WTC11 (cell line): ENCODE measurements at regions of chr3 and their contacts with region 1.

Region 1: GRCh38 chr3:49093853-49094767 is at the start of gene QRICH1:
- DNase-seq: peak; percentile 98
- ATAC-seq: peak; percentile 84
- H3K4me3 Mint-ChIP-seq: peak within 1 kb of the TSS; percentile 89
- H3K27ac Mint-ChIP-seq: peak within 1 kb of the TSS; percentile 97
- H3K4me1 Mint-ChIP-seq: peaks cover 8% of the 10 kb centered on the region
- H3K27me3 Mint-ChIP-seq: no peaks in the 10 kb centered on the region
- CTCF ChIP-seq: no peak
- total RNA-seq, gene QRICH1: 110 to 123 TPM (median 120 TPM) in 3 replicates

Region 2: DNA sequence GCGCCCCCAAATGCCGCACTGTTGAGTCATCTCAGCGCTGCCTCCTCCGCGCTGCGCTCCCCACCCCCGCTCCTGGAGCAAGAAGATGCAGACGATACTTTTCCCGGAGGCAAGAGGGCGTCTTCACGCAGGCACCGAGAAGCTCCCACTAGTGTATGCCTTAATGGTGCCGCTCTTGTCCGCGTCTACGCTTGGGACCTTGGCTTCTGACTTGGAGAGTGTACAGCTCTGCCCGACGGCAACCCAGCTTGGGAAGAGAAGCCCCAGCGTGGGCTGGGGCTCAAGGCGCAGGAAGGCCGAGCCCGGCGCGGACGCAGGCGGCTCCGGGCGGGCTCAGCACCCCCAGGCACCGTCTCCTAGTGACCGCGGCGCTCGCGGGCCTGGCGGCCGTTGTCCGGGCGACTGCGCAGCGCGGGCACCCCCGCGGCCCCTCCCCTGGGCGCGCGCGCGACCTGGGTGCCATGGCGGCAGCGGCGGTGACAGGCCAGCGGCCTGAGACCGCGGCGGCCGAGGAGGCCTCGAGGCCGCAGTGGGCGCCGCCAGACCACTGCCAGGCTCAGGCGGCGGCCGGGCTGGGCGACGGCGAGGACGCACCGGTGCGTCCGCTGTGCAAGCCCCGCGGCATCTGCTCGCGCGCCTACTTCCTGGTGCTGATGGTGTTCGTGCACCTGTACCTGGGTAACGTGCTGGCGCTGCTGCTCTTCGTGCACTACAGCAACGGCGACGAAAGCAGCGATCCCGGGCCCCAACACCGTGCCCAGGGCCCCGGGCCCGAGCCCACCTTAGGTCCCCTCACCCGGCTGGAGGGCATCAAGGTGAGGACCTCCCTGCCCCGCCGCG is 104.1 kb before region 1 on chr3 and contains the start of gene P4HTM:
- CTCF ChIA-PET with region 1: interaction called, 38 read pairs
- POLR2A ChIA-PET with region 1: interaction called, 6 read pairs
- DNase-seq: peak; percentile 84
- ATAC-seq: peak; percentile 74
- H3K4me3 Mint-ChIP-seq: peak within 1 kb of the TSS; percentile 89
- H3K27ac Mint-ChIP-seq: peak within 1 kb of the TSS; percentile 92
- H3K4me1 Mint-ChIP-seq: peaks cover 23% of the 10 kb centered on the region
- H3K27me3 Mint-ChIP-seq: no peaks in the 10 kb centered on the region
- CTCF ChIP-seq: no peak
- total RNA-seq, gene P4HTM: 21.9 to 28.8 TPM (median 28.2 TPM) in 3 replicates

Region 3: DNA sequence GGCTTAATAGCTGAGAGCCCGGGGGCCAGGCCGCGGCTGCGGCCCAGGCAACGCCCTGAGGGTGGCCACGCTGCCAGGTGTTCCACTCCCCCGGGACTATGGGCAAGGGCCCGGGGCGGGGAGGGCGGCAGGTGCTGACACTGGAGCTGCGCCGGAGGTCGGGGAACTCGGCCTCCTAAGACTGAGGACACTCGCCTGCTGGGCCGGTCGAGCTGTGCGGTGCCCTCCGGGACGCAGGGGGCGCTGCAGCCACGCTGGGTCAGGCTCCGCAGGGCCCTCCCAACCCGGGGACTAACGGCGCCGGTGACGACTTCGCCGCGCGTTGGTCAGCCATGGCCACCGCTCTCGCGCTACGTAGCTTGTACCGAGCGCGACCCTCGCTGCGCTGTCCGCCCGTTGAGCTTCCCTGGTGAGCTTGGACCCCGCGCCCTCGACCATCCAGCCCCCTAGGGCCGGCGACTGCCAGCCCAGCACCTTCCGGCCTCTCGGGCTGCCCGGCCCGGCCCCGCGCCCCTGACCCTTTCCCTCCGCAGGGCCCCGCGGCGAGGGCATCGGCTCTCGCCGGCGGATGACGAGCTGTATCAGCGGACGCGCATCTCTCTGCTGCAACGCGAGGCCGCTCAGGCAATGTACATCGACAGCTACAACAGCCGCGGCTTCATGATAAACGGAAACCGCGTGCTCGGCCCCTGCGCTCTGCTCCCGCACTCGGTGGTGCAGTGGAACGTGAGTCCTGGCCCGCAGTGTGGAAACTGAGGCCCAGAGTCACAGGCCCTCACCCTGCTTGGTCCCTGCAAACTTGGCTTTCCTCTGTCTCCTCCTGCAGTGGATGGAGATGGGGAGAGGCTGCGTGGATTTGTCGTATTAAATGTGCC is 72.1 kb before region 1 on chr3 and contains the start of gene NDUFAF3:
- CTCF ChIA-PET with region 1: interaction called, 25 read pairs
- POLR2A ChIA-PET with region 1: interaction called, 40 read pairs
- DNase-seq: peak; percentile 97
- ATAC-seq: peak; percentile 71
- H3K4me3 Mint-ChIP-seq: peak within 1 kb of the TSS; percentile 92
- H3K27ac Mint-ChIP-seq: peak within 1 kb of the TSS; percentile 98
- H3K4me1 Mint-ChIP-seq: peaks cover 29% of the 10 kb centered on the region
- H3K27me3 Mint-ChIP-seq: no peaks in the 10 kb centered on the region
- CTCF ChIP-seq: peak; percentile 88
- total RNA-seq, gene NDUFAF3: 36.8 to 50.3 TPM (median 49.6 TPM) in 3 replicates

Region 4: DNA sequence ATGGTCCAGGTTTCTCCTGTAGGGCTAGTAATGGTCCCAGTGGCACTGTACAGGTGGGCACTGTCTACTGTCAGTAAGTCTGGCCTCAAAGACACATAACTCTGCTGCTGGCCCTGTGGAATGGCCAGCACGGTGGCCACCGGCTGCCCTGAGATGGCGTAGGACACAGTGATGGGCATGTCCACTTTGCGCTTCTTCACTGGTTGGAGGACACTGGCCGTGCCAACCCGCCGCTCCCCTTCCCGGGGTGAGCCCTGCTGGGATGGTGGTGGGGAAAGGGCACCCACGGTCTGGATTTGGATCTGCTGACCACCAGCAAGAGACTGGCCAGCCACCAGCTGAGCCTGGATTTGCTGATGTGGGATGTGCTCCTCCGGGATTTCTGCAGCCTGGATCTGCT is 36.8 kb before region 1 on chr3:
- CTCF ChIA-PET with region 1: no interaction called
- POLR2A ChIA-PET with region 1: no interaction called
- DNase-seq: no peak
- ATAC-seq: no peak
- H3K4me3 Mint-ChIP-seq: no peak overlapping the region
- H3K27ac Mint-ChIP-seq: no peak overlapping the region
- H3K4me1 Mint-ChIP-seq: no peaks in the 10 kb centered on the region
- H3K27me3 Mint-ChIP-seq: no peaks in the 10 kb centered on the region
- CTCF ChIP-seq: no peak

Region 5: DNA sequence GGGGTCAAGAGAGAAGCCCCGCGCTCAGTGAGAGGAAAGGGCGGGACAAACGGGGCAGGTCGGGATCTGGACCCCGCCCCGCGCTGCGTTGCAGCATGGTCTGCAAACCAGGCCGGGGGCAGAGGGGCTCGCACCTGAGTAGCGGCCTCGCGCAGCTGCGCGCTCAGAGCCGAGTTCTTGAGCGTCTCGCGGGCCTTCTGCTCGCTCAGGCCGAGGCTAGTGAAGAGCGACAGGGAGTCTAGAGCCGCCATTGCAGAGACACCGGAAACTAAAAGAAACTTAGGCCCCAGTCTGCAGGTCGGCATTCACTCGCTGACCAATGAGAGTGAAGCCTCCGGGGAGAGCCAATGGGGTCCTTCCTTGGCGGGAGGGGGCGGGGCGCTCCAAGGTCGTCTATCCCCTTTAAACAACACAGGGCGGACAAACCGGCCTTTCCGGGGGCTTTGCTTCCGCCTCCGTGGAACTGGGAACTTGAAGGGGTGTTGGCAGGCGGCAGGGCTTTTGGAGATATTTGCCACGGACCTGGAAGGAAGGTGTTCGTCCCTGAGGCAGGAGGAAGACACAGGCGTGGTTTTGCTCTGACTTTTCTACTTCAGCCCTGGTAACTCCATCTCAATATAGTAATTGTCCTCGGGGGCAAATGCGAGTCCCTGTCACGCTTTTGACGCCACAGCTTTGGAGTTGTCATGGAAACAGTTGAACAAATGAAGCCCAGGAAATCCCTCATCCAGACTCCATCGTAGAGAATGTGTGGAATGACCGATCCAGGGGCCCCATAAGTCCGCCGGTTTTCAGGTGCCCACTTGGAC is 10.6 kb after region 1 on chr3 and contains the start of gene QARS1:
- CTCF ChIA-PET with region 1: interaction called, 14 read pairs
- POLR2A ChIA-PET with region 1: interaction called, 14 read pairs
- DNase-seq: peak; percentile 95
- ATAC-seq: peak; percentile 98
- H3K4me3 Mint-ChIP-seq: peak within 1 kb of the TSS; percentile 97
- H3K27ac Mint-ChIP-seq: peak within 1 kb of the TSS; percentile 96
- H3K4me1 Mint-ChIP-seq: peaks cover 25% of the 10 kb centered on the region
- H3K27me3 Mint-ChIP-seq: no peaks in the 10 kb centered on the region
- CTCF ChIP-seq: no peak
- total RNA-seq, gene QARS1: 405 to 471 TPM (median 433 TPM) in 3 replicates

Region 6: DNA sequence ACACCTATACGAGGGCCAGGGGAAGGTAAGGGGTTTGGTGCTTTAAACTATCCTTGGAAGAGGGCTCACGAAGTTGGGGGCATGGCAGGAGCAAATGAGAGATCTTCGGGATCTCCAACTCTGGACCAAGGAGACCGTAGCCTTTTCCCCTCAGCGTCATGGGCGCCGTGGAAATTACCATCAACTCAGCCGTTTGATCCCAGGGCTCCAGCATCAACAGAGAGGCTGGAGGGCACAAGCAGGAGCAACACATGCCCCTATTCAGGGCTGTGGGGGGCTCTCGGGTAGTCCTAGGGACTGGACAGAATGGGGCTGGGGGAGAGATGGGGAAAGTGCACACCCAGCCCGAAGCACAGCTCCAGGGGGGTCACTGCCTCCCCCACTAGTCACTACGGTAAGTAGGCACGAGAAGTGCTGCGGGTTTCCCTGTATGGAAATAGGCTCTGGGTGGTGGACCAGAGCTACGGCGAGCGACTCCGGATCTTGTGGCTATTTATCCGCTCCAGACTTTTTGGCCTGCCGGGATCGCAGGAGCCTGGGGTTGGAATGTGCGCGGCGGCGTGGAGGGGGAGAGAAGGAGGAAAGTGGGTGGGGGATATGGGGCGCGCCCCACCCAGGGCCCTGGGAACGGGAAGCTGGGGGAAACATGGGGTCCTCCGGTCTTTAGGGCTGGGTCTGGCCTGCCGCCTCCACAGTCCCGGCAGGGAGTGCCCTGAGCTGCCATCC is 39.3 kb after region 1 on chr3:
- CTCF ChIA-PET with region 1: interaction called, 21 read pairs
- POLR2A ChIA-PET with region 1: interaction called, 9 read pairs
- DNase-seq: peak; percentile 81
- ATAC-seq: peak; percentile 72
- H3K4me3 Mint-ChIP-seq: peak overlapping the region; percentile 89
- H3K27ac Mint-ChIP-seq: peak overlapping the region; percentile 89
- H3K4me1 Mint-ChIP-seq: peaks cover 12% of the 10 kb centered on the region
- H3K27me3 Mint-ChIP-seq: peaks cover 5% of the 10 kb centered on the region
- CTCF ChIP-seq: no peak

Region 7: GRCh38 chr3:49153349-49153912 is 59.3 kb after region 1 on chr3:
- CTCF ChIA-PET with region 1: no interaction called
- POLR2A ChIA-PET with region 1: no interaction called
- DNase-seq: no peak
- ATAC-seq: no peak
- H3K4me3 Mint-ChIP-seq: no peak overlapping the region
- H3K27ac Mint-ChIP-seq: no peak overlapping the region
- H3K4me1 Mint-ChIP-seq: peaks cover 4% of the 10 kb centered on the region; the same call in 1 of the 2 replicates
- H3K27me3 Mint-ChIP-seq: peaks cover 53% of the 10 kb centered on the region
- CTCF ChIP-seq: no peak

Region 8: GRCh38 chr3:49411968-49412631 is 318.0 kb after region 1 on chr3 and contains the starts of genes RHOA and TCTA:
- CTCF ChIA-PET with region 1: no interaction called
- POLR2A ChIA-PET with region 1: interaction called, 10 read pairs
- DNase-seq: peak; percentile 96
- ATAC-seq: peak; percentile 86
- H3K4me3 Mint-ChIP-seq: peak within 1 kb of the TSS; percentile 97
- H3K27ac Mint-ChIP-seq: peak within 1 kb of the TSS; percentile 98
- H3K4me1 Mint-ChIP-seq: peaks cover 41% of the 10 kb centered on the region
- H3K27me3 Mint-ChIP-seq: no peaks in the 10 kb centered on the region
- CTCF ChIP-seq: no peak
- total RNA-seq, gene RHOA: 367 to 398 TPM (median 389 TPM) in 3 replicates
- total RNA-seq, gene TCTA: 10.1 to 11.9 TPM (median 11.5 TPM) in 3 replicates

Region 9: DNA sequence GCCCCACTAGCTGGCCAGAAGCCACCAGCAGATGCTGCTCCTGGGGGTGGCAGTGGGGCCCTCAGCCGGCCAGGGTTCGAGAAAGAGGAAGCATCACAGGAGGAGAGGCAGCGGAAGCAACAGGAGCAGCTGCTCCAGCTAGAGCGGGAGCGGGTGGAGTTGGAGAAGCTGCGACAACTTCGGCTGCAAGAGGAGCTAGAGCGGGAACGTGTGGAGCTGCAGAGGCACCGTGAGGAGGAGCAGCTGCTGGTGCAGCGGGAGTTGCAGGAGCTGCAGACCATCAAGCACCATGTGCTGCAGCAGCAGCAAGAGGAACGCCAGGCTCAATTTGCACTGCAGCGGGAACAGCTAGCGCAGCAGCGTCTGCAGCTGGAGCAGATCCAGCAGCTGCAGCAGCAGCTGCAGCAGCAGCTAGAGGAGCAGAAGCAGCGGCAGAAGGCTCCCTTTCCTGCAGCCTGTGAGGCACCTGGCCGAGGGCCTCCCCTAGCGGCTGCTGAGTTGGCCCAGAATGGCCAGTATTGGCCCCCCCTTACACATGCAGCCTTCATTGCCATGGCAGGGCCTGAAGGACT is 562.5 kb after region 1 on chr3:
- CTCF ChIA-PET with region 1: no interaction called
- POLR2A ChIA-PET with region 1: no interaction called
- DNase-seq: no peak
- ATAC-seq: no peak
- H3K4me3 Mint-ChIP-seq: no peak overlapping the region
- H3K27ac Mint-ChIP-seq: no peak overlapping the region
- H3K4me1 Mint-ChIP-seq: no peaks in the 10 kb centered on the region
- H3K27me3 Mint-ChIP-seq: no peaks in the 10 kb centered on the region
- CTCF ChIP-seq: no peak